Ascending aorta (tissue), 2 donors: ENCODE measurements at regions of chr2 and their contacts with region 1.

Region 1: GRCh38 chr2:17976871-17977746 is 98.6 kb downstream of the KCNS3 start:
- DNase-seq: peak; percentile 13 to 85
- H3K4me3 ChIP-seq: peak overlapping the region in 1 of 2 donors; percentile 14
- H3K27ac ChIP-seq: peak overlapping the region; percentile 67 to 84
- H3K4me1 ChIP-seq: peaks cover 0 to 23% of the 10 kb centered on the region in 2 donors
- H3K27me3 ChIP-seq: no peaks in the 10 kb centered on the region
- CTCF ChIP-seq: no peak

Region 2: DNA sequence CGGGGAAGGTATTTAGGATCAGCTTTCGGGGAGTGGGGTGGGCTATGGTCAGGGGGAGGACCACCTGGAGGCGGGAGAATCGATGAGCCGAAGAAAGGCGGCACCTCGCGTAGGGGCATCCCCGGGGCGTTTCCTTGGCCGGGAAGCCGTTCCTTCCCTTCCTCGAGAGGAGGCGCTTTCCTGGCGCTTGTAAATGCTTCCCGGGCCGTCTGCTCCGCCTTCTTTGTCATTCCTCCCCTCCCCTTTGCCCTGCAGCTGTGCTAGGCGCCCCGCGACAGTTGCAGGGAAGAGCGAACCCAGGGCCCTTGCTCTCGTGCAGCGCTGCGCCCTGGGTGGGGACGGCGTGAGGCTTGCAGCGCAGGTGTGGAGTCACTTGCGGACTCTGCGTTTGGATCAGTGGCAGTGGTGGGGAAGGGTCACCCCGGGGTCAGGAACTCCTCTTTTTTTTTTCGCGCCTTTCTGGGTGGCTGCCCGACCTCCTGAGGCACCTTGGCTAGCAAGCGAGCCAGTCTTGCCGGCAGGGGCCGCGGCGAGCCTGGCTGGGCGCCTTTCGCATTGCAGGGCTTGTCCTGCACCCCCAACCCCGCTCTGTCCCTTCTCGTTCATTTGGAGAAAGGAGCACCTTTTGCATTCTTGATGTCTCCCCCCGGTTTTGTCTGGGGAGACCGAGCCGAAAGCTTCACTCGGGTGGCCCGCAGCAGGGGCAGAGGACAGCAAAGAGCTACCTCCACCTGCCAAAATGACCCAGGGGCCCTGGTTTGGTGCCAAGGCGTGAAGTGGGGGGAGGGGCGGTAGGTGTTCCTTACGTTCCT is 97.8 kb before region 1 on chr2:
- intact Hi-C with region 1: loop called (anchors 1 kb)
- DNase-seq: peak in 1 of 2 donors; percentile 84
- H3K4me3 ChIP-seq: peak overlapping the region; percentile 79 to 93
- H3K27ac ChIP-seq: peak overlapping the region; percentile 64 to 81
- H3K4me1 ChIP-seq: peaks cover 0 to 7% of the 10 kb centered on the region in 2 donors
- H3K27me3 ChIP-seq: no peaks in the 10 kb centered on the region
- CTCF ChIP-seq: peak; percentile 13 to 40 (median 24)

Region 3: GRCh38 chr2:17934721-17935120 is 42.4 kb before region 1 on chr2:
- intact Hi-C with region 1: loop called (anchors 1 kb)
- DNase-seq: peak; percentile 69 to 93
- H3K4me3 ChIP-seq: peak overlapping the region in 1 of 2 donors; percentile 59
- H3K27ac ChIP-seq: peak overlapping the region; percentile 86 to 91
- H3K4me1 ChIP-seq: peaks cover 0 to 23% of the 10 kb centered on the region in 2 donors
- H3K27me3 ChIP-seq: no peaks in the 10 kb centered on the region
- CTCF ChIP-seq: no peak

Region 4: DNA sequence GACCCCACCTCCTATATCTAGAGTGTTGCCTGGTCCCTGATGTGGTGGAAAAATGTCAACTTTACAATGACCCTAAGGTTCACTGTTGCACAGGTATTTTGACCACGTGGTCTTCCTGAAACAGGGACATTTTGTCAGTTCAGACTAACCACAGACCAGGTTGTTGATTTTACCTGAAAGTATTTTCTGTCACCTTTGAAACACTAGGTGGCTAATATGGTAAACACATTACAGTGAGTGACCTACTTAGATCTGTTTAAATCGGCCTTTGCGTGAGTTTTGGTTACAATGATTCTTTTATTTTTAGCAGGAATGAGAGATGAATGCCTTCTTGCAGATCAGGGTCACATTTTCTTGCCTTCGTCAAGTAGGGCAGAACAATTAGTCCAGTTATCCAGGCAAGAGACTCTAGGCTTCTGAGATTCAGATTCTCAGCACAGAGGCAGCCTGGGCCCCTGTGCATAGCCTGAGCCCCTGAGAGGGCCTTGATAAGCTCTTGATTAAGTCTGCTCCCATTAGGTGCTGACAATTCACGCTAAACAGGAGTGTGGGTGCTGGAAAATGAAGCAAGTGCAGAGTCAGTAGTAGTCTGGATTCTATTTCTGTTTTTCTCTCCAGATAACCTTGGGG is 127.6 kb after region 1 on chr2:
- intact Hi-C with region 1: no loop called
- DNase-seq: no peak
- H3K4me3 ChIP-seq: no peak overlapping the region
- H3K27ac ChIP-seq: peak overlapping the region in 1 of 2 donors; percentile 25
- H3K4me1 ChIP-seq: peaks cover 0 to 8% of the 10 kb centered on the region in 2 donors
- H3K27me3 ChIP-seq: no peaks in the 10 kb centered on the region
- CTCF ChIP-seq: no peak